Prostate gland (tissue), 2 donors: ENCODE measurements at regions of chr11 and their contacts with region 1.

Region 1: DNA sequence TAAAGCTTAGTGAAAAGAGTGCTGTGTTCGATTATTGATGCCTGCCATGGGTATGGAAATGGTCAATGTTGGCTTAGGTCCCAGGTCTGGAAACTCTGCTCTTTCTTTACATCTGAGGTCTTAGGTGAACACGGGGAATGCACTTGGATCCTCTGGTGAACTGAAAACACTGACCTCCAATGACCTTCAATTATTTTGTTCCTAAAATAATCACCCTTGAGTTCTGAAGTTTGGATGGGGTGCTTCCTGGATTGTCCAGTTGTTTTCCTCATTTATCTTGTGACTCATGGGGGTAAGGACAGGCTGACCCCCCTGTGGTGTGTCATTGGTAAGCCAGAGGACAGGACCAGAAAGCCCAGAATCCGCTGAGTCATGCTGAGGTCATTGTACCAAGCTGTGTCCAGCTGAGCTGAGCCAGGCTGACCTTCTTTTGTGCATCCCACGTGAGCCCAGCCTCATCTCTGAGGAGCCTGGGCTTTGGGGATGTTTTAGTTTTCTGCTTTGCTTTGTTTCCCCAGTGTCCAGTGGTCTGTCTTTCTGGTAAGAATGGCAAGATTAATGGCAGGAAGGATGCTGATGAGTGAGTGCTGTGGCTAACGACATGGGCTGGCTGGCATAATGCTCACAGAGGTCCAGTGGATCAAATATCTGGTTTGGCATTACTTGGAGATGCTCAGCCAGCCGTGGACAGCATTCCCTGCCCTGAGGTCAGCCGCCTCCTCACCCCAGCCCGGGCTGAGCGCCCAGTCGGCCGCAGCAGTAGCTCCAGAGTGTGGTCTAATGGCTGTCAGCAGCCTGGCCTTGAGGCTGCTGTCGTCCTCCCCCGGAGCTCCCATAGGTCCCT is 35.6 kb downstream of the AMPD3 start:
- DNase-seq: no peak
- H3K4me3 ChIP-seq: no peak overlapping the region
- H3K27ac ChIP-seq: peak overlapping the region in 1 of 2 donors; percentile 24
- H3K4me1 ChIP-seq: no peaks in the 10 kb centered on the region
- H3K27me3 ChIP-seq: no peaks in the 10 kb centered on the region
- CTCF ChIP-seq: no peak
- POLR2A ChIP-seq: no peak

Region 2: GRCh38 chr11:10455637-10456487 is 34.8 kb before region 1 on chr11:
- intact Hi-C with region 1: loop called (anchors 5 kb)
- DNase-seq: peak; percentile 66
- H3K4me3 ChIP-seq: peak overlapping the region; percentile 14 to 30
- H3K27ac ChIP-seq: peak overlapping the region; percentile 74 to 76
- H3K4me1 ChIP-seq: peaks cover 19% of the 10 kb centered on the region
- H3K27me3 ChIP-seq: no peaks in the 10 kb centered on the region
- CTCF ChIP-seq: no peak
- POLR2A ChIP-seq: no peak

Region 3: DNA sequence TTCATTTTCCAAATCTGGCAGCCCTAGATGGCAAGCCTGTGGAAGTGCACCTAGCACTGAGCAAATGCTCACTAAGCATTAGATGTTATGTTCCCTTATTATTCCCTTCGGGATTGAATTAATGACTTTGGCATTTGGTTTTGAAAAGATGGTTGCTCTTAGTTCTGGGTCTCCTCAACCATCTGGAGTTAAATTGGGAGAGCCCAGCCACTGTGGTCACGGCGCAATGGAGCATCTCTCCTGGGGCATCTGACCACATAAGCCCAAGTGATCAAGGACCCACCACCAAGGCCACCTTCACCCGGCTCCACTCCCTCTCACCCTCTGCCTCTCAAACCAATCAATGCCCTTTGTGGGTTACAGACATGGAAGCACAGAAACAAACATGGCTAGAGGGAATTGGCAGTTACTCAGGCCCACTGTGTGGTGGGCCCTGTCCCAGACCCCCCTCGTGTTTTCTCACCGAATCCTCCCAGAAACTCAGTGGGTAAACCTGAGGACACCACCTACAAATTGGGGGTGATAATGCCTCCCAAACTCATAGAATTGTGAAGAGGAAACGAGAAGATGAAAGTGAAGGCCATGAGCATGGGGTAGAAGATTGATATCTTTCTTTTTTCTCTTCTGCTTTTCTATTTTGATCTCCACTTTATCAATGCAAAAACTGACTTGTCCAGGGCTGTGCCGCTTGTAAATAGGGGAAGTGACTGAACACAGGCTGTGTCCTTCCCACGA is 150.7 kb after region 1 on chr11:
- intact Hi-C with region 1: no loop called
- DNase-seq: no peak
- H3K4me3 ChIP-seq: no peak overlapping the region
- H3K27ac ChIP-seq: no peak overlapping the region
- H3K4me1 ChIP-seq: no peaks in the 10 kb centered on the region
- H3K27me3 ChIP-seq: no peaks in the 10 kb centered on the region
- CTCF ChIP-seq: no peak
- POLR2A ChIP-seq: no peak